ENCODE measurements at regions of chr7 and their contacts with region 1.

Region 1: DNA sequence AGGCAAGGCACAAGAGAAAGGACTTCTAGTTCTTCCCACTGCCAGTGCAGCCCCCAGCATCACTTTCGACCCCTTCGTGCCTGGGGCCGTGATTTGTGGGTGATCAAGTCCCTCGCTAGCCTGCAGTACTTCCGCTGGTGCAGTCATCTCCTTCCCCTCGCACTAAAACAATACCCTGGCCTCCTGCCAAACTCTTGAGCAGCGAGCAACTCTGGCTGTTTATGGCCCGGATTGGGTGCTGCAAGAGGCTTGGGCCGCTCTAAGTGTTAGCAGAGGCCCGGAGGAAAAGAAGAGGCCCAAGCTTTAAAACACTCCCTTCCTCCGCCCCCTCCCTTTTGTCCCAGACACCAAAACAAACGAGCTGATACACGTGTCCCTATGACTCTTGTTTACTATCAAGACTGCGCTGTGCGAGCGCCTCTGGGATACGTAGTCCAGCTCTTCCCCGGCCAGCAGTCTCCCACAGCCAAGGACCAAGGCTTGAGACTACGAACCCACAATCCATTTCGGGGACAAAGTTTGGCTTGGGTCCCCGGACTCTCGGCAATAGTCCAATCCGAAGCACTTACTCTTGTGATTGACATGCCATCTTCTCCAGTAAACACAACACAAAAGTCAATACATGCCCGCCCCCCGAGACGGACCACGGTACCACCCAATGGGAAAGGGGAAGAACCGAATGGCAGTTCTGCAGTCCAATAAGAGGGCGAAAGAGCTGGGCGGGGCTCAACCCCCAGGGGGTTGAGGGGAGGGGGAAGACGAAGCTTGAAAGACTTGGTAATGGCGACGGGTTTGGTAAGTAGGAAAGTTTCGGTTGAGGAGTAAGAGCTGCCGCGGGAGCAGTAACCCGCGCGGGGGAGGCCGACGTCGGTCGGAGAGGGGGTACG is at the start of gene HBP1:
- DNase-seq: peak; percentile 98
- H3K4me3 Mint-ChIP-seq: peak within 1 kb of the TSS; percentile 90
- H3K27ac Mint-ChIP-seq: peak within 1 kb of the TSS; percentile 94
- H3K4me1 Mint-ChIP-seq: peaks cover 32% of the 10 kb centered on the region
- H3K27me3 Mint-ChIP-seq: peaks cover 7% of the 10 kb centered on the region
- total RNA-seq, gene HBP1: 44.0 to 45.5 TPM

Region 2: GRCh38 chr7:106865130-106866041 is 303.1 kb before region 1 on chr7 and contains the start of gene PIK3CG:
- CTCF ChIA-PET with region 1: no interaction called
- POLR2A ChIA-PET with region 1: interaction called, 10 read pairs
- DNase-seq: peak; percentile 32
- H3K4me3 Mint-ChIP-seq: peak within 1 kb of the TSS; percentile 94
- H3K27ac Mint-ChIP-seq: peak within 1 kb of the TSS; percentile 92
- H3K4me1 Mint-ChIP-seq: peaks cover 50% of the 10 kb centered on the region
- H3K27me3 Mint-ChIP-seq: no peaks in the 10 kb centered on the region
- total RNA-seq, gene PIK3CG: 47.3 to 49.6 TPM

Region 3: DNA sequence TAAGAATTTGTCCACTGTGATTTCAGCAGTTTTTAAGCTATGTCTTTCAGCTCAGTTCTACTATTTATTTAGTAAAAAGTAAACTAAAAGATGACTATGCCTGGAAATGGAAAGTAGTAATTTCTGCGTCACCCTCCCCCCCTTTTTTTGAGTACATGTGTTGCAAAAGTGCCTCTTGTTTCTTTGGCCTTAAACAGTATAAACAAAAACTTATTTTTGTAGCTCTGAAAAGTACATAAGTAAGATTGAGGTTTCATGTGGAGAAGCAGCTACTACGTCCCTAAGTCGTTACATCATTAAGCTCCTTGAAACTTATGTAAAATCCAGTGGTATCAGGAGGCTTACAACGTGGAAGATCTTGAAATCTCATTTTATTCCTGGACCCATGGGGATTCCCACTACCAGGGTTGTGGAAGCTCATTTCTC is 46.0 kb before region 1 on chr7:
- CTCF ChIA-PET with region 1: no interaction called
- POLR2A ChIA-PET with region 1: interaction called, 17 read pairs
- DNase-seq: no peak
- H3K4me3 Mint-ChIP-seq: no peak overlapping the region
- H3K27ac Mint-ChIP-seq: no peak overlapping the region
- H3K4me1 Mint-ChIP-seq: peaks cover 18% of the 10 kb centered on the region
- H3K27me3 Mint-ChIP-seq: no peaks in the 10 kb centered on the region

Region 4: DNA sequence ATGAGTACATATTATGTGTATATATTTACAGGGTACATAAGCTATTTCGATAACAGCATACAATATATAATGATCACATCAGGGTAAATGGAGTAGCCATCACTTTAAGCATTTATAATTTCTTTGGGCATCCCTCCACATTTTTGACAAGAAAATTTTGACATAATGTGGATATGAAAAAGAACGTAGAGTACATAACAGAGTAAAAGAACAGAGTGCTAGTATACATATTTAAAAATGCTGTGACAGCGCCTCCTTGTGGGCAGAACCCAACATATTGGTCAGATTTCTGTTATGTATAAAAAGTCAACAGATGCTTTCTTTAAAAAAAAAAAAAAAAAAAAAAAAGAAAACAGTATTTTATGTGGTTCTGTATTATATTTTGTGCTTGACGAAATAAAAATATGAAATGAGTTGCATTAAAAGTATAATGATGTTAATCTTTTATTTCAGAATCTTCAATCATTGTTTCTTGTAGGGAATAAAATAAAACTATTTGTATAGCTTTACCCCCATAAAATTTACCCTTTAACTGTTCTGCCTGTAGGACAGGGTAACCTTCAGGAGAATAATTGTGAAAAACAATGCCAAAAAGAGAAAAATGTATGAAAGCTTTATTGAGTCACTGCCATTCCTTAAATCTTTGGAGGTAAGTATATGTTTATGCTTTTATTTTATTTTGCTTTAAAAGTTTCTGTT is 18.0 kb before region 1 on chr7:
- CTCF ChIA-PET with region 1: interaction called, 45 read pairs
- POLR2A ChIA-PET with region 1: interaction called, 17 read pairs
- DNase-seq: peak; percentile 80
- H3K4me3 Mint-ChIP-seq: no peak overlapping the region
- H3K27ac Mint-ChIP-seq: no peak overlapping the region
- H3K4me1 Mint-ChIP-seq: peaks cover 2% of the 10 kb centered on the region
- H3K27me3 Mint-ChIP-seq: no peaks in the 10 kb centered on the region

Region 5: DNA sequence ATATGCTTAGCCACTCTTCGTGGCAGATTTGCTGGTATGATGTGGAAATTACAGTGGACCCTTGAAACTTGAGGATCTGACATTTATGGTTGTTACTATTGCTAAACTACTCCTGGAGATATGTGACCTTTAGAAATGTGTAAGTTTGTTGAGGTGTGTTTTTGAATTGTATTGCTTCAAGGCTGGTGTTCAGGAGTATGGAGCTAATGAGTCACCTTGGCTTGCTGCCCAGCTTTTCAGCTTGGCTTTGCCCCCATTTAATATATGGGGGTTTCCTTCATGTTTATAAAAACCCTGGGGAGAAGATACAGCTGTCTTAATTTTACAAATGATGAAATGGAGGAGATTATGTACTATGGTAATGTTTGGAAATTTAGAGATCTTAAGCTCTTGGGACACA is 11.9 kb after region 1 on chr7:
- CTCF ChIA-PET with region 1: interaction called, 5 read pairs
- POLR2A ChIA-PET with region 1: interaction called, 30 read pairs
- DNase-seq: no peak
- H3K4me3 Mint-ChIP-seq: no peak overlapping the region
- H3K27ac Mint-ChIP-seq: no peak overlapping the region
- H3K4me1 Mint-ChIP-seq: peaks cover 5% of the 10 kb centered on the region
- H3K27me3 Mint-ChIP-seq: no peaks in the 10 kb centered on the region

Region 6: GRCh38 chr7:107563775-107564552 is 395.5 kb after region 1 on chr7 and contains the starts of genes COG5 and DUS4L:
- CTCF ChIA-PET with region 1: no interaction called
- POLR2A ChIA-PET with region 1: interaction called, 15 read pairs
- DNase-seq: peak; percentile 88
- H3K4me3 Mint-ChIP-seq: peak within 1 kb of the TSS; percentile 74
- H3K27ac Mint-ChIP-seq: peak within 1 kb of the TSS; percentile 92
- H3K4me1 Mint-ChIP-seq: peaks cover 56% of the 10 kb centered on the region
- H3K27me3 Mint-ChIP-seq: no peaks in the 10 kb centered on the region
- total RNA-seq, gene COG5: 40.1 to 45.3 TPM
- total RNA-seq, gene DUS4L: 8.1 to 8.9 TPM

Region 7: DNA sequence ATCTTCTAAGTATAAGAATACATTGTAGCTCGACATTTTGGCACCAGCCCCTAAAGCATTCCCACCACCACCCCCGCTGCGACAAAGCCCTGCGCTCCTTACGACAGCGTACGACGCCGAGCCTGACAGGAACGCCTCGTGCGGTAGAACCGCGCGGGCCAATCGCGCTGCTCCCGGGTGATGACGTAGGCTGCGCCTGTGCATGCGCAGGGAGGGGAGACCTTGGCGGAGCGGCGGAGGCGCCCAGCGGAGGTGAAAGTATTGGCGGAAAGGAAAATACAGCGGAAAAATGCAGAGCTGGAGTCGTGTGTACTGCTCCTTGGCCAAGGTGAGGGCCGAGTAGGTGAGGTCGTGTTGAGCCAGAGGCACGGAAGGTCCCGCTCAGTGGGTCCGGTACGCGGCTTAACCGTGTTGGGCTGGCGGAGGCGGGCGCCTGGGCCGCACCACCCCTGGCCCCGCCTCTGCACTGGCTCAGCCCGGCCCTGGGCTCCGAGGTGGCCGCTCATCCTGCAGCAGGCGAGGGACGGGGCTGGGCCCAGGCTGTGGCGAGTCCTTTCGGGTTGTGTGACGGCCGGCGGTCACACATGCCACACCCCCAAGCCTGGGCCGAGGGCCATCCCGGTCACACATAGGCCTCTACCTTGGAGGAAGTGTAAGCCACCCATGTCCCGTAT is 722.6 kb after region 1 on chr7 and contains the start of gene DLD:
- CTCF ChIA-PET with region 1: no interaction called
- POLR2A ChIA-PET with region 1: interaction called, 17 read pairs
- DNase-seq: peak; percentile 95
- H3K4me3 Mint-ChIP-seq: peak within 1 kb of the TSS; percentile 93
- H3K27ac Mint-ChIP-seq: peak within 1 kb of the TSS; percentile 91
- H3K4me1 Mint-ChIP-seq: peaks cover 47% of the 10 kb centered on the region
- H3K27me3 Mint-ChIP-seq: no peaks in the 10 kb centered on the region
- total RNA-seq, gene DLD: 68.2 to 70.6 TPM

Measured in activated CD4-positive, alpha-beta memory T cell treated with anti-CD3 and anti-CD28 coated beads, Interleukin-2, amount 10 ng/mL, durations not matched to agents 7 days and 5 days (primary cell).